Right cardiac atrium (tissue), 5 donors: ENCODE measurements at regions of chr15 and their contacts with region 1.

Region 1: GRCh38 chr15:70679919-70680231 is 83.5 kb downstream of the UACA start:
- DNase-seq: no peak
- ATAC-seq: no peak
- H3K4me3 ChIP-seq: no peak overlapping the region
- H3K27ac ChIP-seq: no peak overlapping the region
- H3K4me1 ChIP-seq: no peaks in the 10 kb centered on the region
- H3K27me3 ChIP-seq: no peaks in the 10 kb centered on the region

Region 2: GRCh38 chr15:70722266-70723121 is 42.6 kb after region 1 on chr15:
- intact Hi-C with region 1: loop called in 2 of 4 experiments (anchors 1 to 10 kb)
- DNase-seq: no peak
- ATAC-seq: no peak
- H3K4me3 ChIP-seq: no peak overlapping the region
- H3K27ac ChIP-seq: no peak overlapping the region
- H3K4me1 ChIP-seq: peaks cover 7% of the 10 kb centered on the region
- H3K27me3 ChIP-seq: no peaks in the 10 kb centered on the region

Region 3: GRCh38 chr15:70799667-70800450 is 120.0 kb after region 1 on chr15:
- intact Hi-C with region 1: loop called in 2 of 4 experiments (anchors 5 kb)
- DNase-seq: peak in 2 of 3 donors; percentile 33 to 66
- ATAC-seq: peak; percentile 86 to 94
- H3K4me3 ChIP-seq: no peak overlapping the region
- H3K27ac ChIP-seq: no peak overlapping the region
- H3K4me1 ChIP-seq: peaks cover 3% of the 10 kb centered on the region
- H3K27me3 ChIP-seq: no peaks in the 10 kb centered on the region

Region 4: GRCh38 chr15:70806992-70807712 is 127.3 kb after region 1 on chr15:
- intact Hi-C with region 1: loop called (anchors 5 kb)
- DNase-seq: peak; percentile 55 to 87 (median 80)
- ATAC-seq: peak; percentile 54 to 59
- H3K4me3 ChIP-seq: no peak overlapping the region
- H3K27ac ChIP-seq: no peak overlapping the region
- H3K4me1 ChIP-seq: peaks cover 5% of the 10 kb centered on the region
- H3K27me3 ChIP-seq: no peaks in the 10 kb centered on the region